ENCODE measurements at regions of chr17 and their contacts with region 1.

Region 1: DNA sequence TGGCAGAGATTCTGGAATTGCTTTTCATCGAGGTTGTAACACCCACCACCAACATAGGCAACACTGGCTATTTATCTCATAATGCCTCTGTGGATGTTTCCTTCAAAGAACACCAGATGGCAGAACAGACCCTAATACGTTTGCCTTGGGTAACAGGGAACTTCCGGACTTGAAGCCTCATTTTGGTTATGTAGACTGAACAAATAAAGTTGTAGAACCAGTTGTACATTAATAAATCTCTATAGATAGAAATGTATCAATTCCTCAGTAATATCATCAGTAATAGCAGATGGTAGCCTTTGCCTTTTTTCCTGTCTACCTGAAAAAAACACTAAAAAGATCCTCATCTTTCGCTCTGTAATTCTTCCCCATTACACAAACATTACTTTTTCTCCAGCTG is 25.9 kb upstream of the APOH start:
- DNase-seq: no peak

Region 2: GRCh38 chr17:66567234-66568170 is 312.4 kb after region 1 on chr17:
- intact Hi-C with region 1: loop called (anchors 2 kb)
- DNase-seq: peak; percentile 83

Region 3: GRCh38 chr17:66625311-66625775 is 370.2 kb after region 1 on chr17:
- intact Hi-C with region 1: loop called (anchors 5 kb)
- DNase-seq: no peak

Region 4: GRCh38 chr17:66673668-66674315 is 418.7 kb after region 1 on chr17:
- intact Hi-C with region 1: loop called (anchors 5 kb)
- DNase-seq: no peak

Measured in cardiac septum (tissue), 1 donor.